Ovary (tissue), 10 donors: ENCODE measurements at regions of chr17 and their contacts with region 1.

Region 1: GRCh38 chr17:57158795-57159194 is 73.7 kb downstream of the AKAP1 start:
- DNase-seq: no peak
- H3K4me3 ChIP-seq: no peak overlapping the region
- H3K27ac ChIP-seq: no peak overlapping the region
- H3K4me1 ChIP-seq: no peaks in the 10 kb centered on the region
- H3K27me3 ChIP-seq: no peaks in the 10 kb centered on the region
- CTCF ChIP-seq: no peak
- EP300 ChIP-seq: no peak
- POLR2A ChIP-seq: no peak

Region 2: GRCh38 chr17:57068222-57068658 is 90.6 kb before region 1 on chr17:
- intact Hi-C with region 1: no loop called
- DNase-seq: no peak
- H3K4me3 ChIP-seq: no peak overlapping the region
- H3K27ac ChIP-seq: no peak overlapping the region
- H3K4me1 ChIP-seq: no peaks in the 10 kb centered on the region
- H3K27me3 ChIP-seq: no peaks in the 10 kb centered on the region
- CTCF ChIP-seq: no peak
- EP300 ChIP-seq: no peak
- POLR2A ChIP-seq: no peak

Region 3: DNA sequence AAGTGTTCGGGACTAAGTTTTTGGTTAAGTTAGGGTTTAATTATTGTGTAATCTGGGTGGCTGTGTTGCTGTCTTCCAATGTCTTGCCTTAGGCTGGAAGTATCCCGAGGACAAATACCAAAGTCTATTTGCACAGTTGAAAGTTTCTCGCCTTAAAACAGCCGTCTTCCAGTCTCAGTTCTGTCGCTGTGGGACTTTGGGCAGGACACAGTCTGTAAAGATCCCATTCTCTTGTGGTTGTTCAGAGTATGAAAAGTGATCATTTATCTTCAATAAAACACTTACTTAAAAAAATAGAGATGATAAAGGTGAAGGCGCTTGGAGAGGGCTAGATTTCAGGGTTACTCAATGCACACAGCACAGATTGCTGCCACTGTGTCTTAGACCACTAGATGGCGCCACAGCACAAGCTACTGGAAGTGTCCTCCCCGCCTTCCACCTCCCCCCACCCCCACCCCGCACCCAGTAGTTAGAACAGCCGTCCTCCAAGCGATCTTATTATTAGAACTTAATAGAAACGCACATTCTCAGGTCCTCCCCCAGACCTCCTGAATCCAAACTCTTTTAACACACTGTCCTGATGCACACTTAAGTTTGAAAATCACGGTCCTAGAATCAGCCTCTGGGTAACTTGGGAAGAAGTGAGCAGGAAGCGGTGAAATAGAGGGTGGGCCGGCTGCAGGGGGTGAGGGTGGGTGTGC is 27.9 kb before region 1 on chr17:
- intact Hi-C with region 1: loop called in 1 of 4 experiments (anchors 1 kb)
- DNase-seq: peak; percentile 83 to 92 (median 88)
- H3K4me3 ChIP-seq: no peak overlapping the region
- H3K27ac ChIP-seq: no peak overlapping the region
- H3K4me1 ChIP-seq: no peaks in the 10 kb centered on the region
- H3K27me3 ChIP-seq: no peaks in the 10 kb centered on the region
- CTCF ChIP-seq: peak; percentile 54 to 90 (median 75)
- EP300 ChIP-seq: no peak
- POLR2A ChIP-seq: no peak